CD8-positive, alpha-beta memory T cell (primary cell): ENCODE measurements at regions of chr7 and their contacts with region 1.

Region 1: DNA sequence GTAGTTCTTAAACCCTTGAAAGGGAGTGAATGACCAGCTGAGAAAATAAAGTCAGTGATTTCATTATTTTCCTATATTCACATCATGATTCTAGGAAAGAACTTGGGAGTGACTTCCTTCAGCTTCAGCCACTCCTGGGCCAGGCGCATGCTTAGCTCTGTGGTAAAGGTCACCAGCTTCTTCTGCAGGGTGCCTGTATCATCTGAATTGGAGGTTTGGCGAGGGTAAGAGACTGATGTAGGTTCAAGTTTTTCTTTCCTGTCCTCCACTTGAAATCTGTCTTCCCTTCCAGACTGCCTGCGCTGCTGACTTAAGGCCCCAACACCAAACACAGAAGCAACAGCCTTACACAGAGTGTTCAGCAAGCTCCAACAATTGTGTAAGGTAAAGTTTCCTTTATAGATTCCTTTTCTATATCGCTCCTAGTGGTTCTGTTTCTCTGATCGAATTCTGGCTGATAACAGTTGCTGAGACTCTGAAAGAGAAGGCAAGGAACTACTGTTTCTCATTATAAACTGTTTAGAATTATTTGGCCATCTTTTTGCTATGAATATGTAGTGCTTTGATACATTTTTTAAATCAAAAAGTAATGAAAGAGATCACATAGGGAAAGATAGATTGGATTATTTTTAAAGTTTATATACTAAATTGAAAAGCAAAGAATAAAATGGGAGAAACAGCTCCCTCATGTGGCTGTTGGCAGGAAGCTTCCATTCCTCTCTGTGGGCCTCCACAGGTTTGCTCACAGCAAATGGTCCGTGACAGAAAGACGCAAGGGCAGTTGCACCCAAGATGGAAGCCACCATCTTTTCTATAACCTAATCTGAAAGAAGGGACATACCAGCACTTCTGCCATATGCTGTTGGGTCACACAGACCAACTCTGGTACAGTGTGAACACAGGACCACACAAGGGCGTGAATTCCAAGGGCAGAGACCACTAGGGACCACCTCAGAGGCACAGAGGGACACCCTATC is 14.0 kb downstream of the GATAD1 start:
- DNase-seq: peak in 1 of 5 donors; percentile 18
- H3K4me3 ChIP-seq: no peak overlapping the region
- H3K4me3 Mint-ChIP-seq: no peak overlapping the region
- H3K27ac ChIP-seq: no peak overlapping the region
- H3K27ac Mint-ChIP-seq: peak overlapping the region in 1 of 8 donors; percentile 50
- H3K4me1 ChIP-seq: no peaks in the 10 kb centered on the region
- H3K4me1 Mint-ChIP-seq: peaks cover 0 to 2% (median 0%) of the 10 kb centered on the region in 3 donors
- H3K27me3 ChIP-seq: no peaks in the 10 kb centered on the region
- H3K27me3 Mint-ChIP-seq: no peaks in the 10 kb centered on the region

Region 2: GRCh38 chr7:92366730-92367129 is 94.6 kb before region 1 on chr7:
- CTCF ChIA-PET with region 1: no interaction called
- POLR2A ChIA-PET with region 1: no interaction called
- DNase-seq: no peak
- H3K4me3 ChIP-seq: no peak overlapping the region
- H3K4me3 Mint-ChIP-seq: no peak overlapping the region
- H3K27ac ChIP-seq: no peak overlapping the region
- H3K27ac Mint-ChIP-seq: no peak overlapping the region
- H3K4me1 ChIP-seq: no peaks in the 10 kb centered on the region
- H3K4me1 Mint-ChIP-seq: no peaks in the 10 kb centered on the region
- H3K27me3 ChIP-seq: no peaks in the 10 kb centered on the region
- H3K27me3 Mint-ChIP-seq: no peaks in the 10 kb centered on the region

Region 3: DNA sequence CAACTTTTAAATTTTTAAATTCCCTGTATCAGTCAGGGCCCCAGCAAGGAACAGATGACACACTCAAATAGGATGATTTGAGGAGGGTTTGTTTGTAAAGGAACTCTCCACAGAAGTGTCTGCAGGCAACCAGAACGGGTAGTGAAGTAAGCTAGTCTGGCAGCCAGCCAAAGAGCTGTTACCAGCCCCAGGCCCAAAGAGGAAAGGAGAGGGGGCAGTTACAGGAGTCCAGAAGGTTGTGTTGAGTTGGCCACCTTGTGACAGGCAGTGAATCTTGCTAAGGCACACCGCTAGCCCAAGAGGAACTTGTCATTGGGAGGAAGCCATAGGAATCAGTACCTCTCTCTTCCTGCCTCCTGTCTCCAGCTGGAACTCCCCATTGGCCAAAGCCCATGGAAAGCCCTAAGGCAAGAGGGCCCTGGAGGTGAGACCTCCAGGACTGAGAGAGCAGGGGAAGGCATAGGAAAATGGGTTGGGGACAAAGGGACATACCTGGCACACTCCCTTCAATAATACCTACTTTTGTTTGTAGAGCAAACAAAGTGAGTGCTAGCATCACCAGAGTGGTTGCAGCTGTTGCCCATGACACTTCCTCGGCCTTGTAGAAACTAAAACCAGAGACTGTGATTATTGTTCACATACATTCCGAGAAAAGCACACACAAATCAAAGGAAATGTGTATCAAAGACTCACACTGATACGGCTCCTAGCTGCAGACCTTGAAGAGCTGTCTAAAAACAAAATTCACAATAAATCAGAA is 39.5 kb before region 1 on chr7:
- CTCF ChIA-PET with region 1: interaction called, 13 read pairs
- POLR2A ChIA-PET with region 1: no interaction called
- DNase-seq: no peak
- H3K4me3 ChIP-seq: no peak overlapping the region
- H3K4me3 Mint-ChIP-seq: no peak overlapping the region
- H3K27ac ChIP-seq: no peak overlapping the region
- H3K27ac Mint-ChIP-seq: no peak overlapping the region
- H3K4me1 ChIP-seq: peaks cover 7% of the 10 kb centered on the region
- H3K4me1 Mint-ChIP-seq: peaks cover 9 to 11% (median 10%) of the 10 kb centered on the region in 3 donors
- H3K27me3 ChIP-seq: no peaks in the 10 kb centered on the region
- H3K27me3 Mint-ChIP-seq: peaks cover 11 to 16% of the 10 kb centered on the region in 2 donors